Spleen (tissue), 13 donors: ENCODE measurements at regions of chr1 and their contacts with region 1.

Region 1: DNA sequence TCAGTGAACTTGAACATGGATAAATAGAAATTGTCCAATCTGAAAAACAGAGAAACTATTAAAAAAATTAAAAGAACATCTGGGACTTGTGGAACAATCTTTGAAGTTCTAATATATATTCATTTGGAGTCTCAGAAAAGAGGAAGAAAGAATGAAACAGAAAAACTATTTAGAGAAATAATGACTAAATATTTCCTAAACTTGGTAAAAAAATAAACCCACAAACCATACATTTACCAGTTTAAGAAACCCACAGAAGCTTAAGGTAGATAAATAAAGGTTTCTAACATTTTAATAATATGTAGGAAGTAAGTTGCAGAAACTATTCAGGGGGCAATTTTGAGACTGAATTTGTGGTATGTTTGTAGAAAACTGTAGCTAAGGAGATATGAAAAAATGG is 437.8 kb downstream of the PTBP2 start:
- DNase-seq: no peak
- H3K4me3 ChIP-seq: no peak overlapping the region
- H3K27ac ChIP-seq: no peak overlapping the region
- H3K4me1 ChIP-seq: peaks cover 0 to 5% (median 1%) of the 10 kb centered on the region in 6 donors
- H3K27me3 ChIP-seq: no peaks in the 10 kb centered on the region
- CTCF ChIP-seq: no peak
- POLR2A ChIP-seq: no peak

Region 2: DNA sequence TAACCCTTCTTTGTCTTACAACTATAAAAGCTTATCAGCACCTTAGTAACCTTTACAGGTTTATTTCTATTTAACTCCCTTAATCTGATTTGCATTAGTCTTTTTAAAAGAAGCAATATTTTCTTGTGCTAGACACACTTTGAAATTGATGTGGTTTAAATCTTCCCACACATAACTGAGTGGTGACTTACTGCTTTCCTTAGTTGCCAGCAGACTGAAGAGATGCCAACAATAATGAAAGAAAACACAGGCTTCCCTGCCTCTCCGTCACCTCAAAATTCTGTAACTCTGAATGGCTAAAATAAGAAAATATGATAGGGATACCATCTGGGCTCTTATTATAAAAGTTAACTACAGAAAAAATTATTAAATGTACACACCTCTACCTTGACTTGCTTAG is 240.9 kb before region 1 on chr1:
- intact Hi-C with region 1: no loop called
- DNase-seq: no peak
- H3K4me3 ChIP-seq: no peak overlapping the region
- H3K27ac ChIP-seq: no peak overlapping the region
- H3K4me1 ChIP-seq: no peaks in the 10 kb centered on the region
- H3K27me3 ChIP-seq: no peaks in the 10 kb centered on the region
- CTCF ChIP-seq: no peak
- POLR2A ChIP-seq: no peak

Region 3: GRCh38 chr1:96973605-96974004 is 185.7 kb before region 1 on chr1:
- intact Hi-C with region 1: no loop called
- DNase-seq: no peak
- H3K4me3 ChIP-seq: no peak overlapping the region
- H3K27ac ChIP-seq: no peak overlapping the region
- H3K4me1 ChIP-seq: no peaks in the 10 kb centered on the region
- H3K27me3 ChIP-seq: peaks cover 0 to 6% (median 0%) of the 10 kb centered on the region in 7 donors
- CTCF ChIP-seq: no peak
- POLR2A ChIP-seq: no peak

Region 4: GRCh38 chr1:97252076-97252475 is 92.7 kb after region 1 on chr1:
- intact Hi-C with region 1: no loop called
- DNase-seq: no peak
- H3K4me3 ChIP-seq: no peak overlapping the region
- H3K27ac ChIP-seq: no peak overlapping the region
- H3K4me1 ChIP-seq: peaks cover 0 to 6% (median 0%) of the 10 kb centered on the region in 6 donors
- H3K27me3 ChIP-seq: no peaks in the 10 kb centered on the region
- CTCF ChIP-seq: no peak
- POLR2A ChIP-seq: no peak

Region 5: DNA sequence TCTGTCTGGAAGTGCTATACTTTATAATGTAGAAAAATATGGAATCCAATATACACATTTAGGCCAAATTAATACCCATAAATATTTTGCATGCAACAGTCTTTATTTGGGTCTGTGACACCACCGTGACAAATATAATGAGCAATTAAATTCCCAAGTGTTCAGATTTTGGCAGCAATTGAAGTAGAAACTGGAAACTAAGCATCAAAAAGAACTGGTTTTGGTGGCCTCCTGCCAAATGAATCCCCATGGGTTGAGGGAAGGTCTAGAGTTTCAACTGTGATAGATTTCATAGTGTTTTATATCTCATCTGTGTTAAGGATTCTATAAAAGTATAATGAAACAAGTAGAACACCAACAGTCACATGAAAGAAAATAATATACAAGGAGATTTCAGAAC is 673.1 kb after region 1 on chr1:
- intact Hi-C with region 1: loop called (anchors 10 kb)
- DNase-seq: no peak
- H3K4me3 ChIP-seq: no peak overlapping the region
- H3K27ac ChIP-seq: no peak overlapping the region
- H3K4me1 ChIP-seq: peaks cover 0 to 23% (median 0%) of the 10 kb centered on the region in 6 donors
- H3K27me3 ChIP-seq: no peaks in the 10 kb centered on the region
- CTCF ChIP-seq: no peak
- POLR2A ChIP-seq: no peak